K562 (cell line): ENCODE measurements at regions of chr11 and their contacts with region 1.

Region 1: GRCh38 chr11:124673333-124674167 is at the starts of genes SIAE and SPA17:
- DNase-seq: peak; percentile 95 to 98 (median 97)
- ATAC-seq: peak; percentile 99
- H3K4me3 ChIP-seq: peak within 1 kb of the TSS; percentile 83
- H3K27ac ChIP-seq: peak within 1 kb of the TSS; percentile 76
- H3K4me1 ChIP-seq: peaks cover 4 to 14% of the 10 kb centered on the region in 2 experiments
- H3K27me3 ChIP-seq: no peaks in the 10 kb centered on the region
- CTCF ChIP-seq: no peak
- EP300 ChIP-seq: peak; percentile 41; the same call in 1 of the 2 replicates
- POLR2A ChIP-seq: peak; percentile 86
- RAD21 ChIP-seq: no peak
- polyA plus RNA-seq, gene SIAE: 0.89 to 1.2 TPM
- polyA plus RNA-seq, gene SPA17: 9.0 to 9.9 TPM

Region 2: GRCh38 chr11:124693142-124693541 is 19.6 kb after region 1 on chr11:
- CTCF ChIA-PET with region 1: no interaction called
- POLR2A ChIA-PET with region 1: no interaction called
- in situ Hi-C with region 1: no loop called
- intact Hi-C with region 1: no loop called
- DNase-seq: no peak
- ATAC-seq: no peak
- H3K4me3 ChIP-seq: no peak overlapping the region
- H3K27ac ChIP-seq: no peak overlapping the region
- H3K4me1 ChIP-seq: no peaks in the 10 kb centered on the region
- H3K27me3 ChIP-seq: 0 out of 5 replicates have a peak, but pooled peaks cover 3 to 4% of the 10 kb centered on the region in 2 experiments
- CTCF ChIP-seq: no peak
- EP300 ChIP-seq: no peak
- POLR2A ChIP-seq: no peak
- RAD21 ChIP-seq: no peak

Region 3: DNA sequence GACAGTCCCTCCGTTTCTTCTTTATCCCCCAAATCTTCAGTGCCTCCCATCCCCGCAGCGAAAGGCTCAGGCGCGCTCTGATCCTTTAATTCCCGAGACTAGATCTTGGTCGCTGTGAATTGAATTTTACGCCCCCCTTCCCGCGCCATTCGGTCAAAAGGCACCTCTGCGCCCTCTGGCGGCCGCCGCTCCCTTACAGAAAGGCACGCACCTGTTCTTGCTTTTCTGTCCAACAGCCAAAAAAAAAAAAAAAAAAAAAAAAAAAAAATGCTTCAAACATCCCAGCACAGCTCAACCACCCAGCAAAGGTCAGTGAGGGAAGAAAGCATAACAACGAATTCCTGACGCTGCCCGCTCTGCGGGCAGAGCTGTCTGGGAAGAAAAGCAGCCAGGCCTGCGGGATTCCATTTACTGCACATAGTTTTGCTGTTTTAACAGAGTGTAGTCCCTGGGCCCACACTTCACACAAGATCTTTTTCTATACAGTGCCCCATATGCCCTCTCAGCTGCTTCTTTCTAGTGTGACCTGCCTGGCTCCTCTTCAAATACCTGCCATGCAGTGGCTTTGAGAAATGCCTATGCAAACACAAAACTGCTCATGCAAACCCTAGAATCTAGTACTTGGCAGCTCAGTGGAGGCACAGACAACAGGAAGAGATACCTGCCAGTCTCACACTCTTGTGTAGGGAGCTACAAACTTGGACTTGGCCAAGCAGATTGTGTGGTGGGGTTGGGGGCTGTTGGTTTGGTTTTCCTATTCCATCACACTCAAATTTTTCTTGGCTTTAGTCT is 89.8 kb after region 1 on chr11:
- CTCF ChIA-PET with region 1: interaction called, 18 read pairs
- POLR2A ChIA-PET with region 1: interaction called, 3 read pairs
- in situ Hi-C with region 1: loop called (anchors 10 kb)
- intact Hi-C with region 1: loop called (anchors 1 kb)
- DNase-seq: peak; percentile 62 to 87 (median 66)
- ATAC-seq: peak; percentile 75
- H3K4me3 ChIP-seq: peak overlapping the region; percentile 46
- H3K27ac ChIP-seq: no peak overlapping the region
- H3K4me1 ChIP-seq: peaks cover 0 to 34% of the 10 kb centered on the region in 2 experiments; a peak in 4 of 5 replicates
- H3K27me3 ChIP-seq: peaks cover 0 to 22% of the 10 kb centered on the region in 2 experiments; a peak in 2 of 5 replicates
- CTCF ChIP-seq: peak; percentile 82 to 84 (median 84)
- EP300 ChIP-seq: no peak
- POLR2A ChIP-seq: no peak
- RAD21 ChIP-seq: peak; percentile 55 to 70

Region 4: DNA sequence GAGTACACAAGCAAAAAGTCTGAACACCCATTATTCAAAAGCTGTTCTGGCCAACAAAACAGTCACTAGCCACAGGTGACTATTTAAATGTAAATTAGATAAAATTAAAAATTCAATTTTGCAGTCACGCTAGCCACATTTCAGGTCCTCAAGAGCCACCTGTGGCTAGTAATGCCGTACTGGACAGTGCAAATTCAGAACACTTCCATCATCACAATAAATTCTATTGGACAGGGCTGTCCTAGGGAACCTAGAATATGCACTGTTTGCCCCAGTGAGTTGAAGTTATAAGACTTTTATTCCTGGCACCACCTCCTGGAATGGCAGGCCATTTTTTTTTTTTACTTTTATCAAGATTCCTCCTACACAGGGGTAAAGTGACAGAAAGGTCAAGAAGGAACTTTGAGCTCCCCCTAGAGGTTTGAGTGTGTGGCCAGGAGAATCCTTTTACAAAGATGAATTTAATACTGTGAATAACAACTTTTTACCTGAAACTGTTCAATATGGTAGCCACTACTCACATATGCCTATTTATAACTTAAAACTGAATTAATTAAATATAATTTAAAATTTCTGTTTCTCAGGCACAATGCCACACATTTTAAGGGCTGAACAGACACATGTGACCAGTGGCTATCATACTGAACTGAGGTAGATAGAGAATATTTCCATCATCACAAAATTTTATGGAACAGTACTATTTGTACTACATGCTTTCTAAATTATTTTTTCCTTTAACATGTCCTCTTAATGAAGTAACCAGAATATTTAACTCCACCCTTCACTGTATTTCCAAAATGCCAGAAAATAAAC is 120.1 kb after region 1 on chr11:
- CTCF ChIA-PET with region 1: interaction called, 10 read pairs
- POLR2A ChIA-PET with region 1: no interaction called
- in situ Hi-C with region 1: no loop called
- intact Hi-C with region 1: loop called (anchors 1 kb)
- DNase-seq: peak; percentile 31 to 76 (median 48)
- ATAC-seq: peak; percentile 93
- H3K4me3 ChIP-seq: no peak overlapping the region
- H3K27ac ChIP-seq: no peak overlapping the region
- H3K4me1 ChIP-seq: 0 out of 5 replicates have a peak, but pooled peaks cover 0 to 3% of the 10 kb centered on the region in 2 experiments
- H3K27me3 ChIP-seq: no peaks in the 10 kb centered on the region
- CTCF ChIP-seq: peak; percentile 59 to 86 (median 72); a peak in 5 of 6 replicates
- EP300 ChIP-seq: no peak; the same call in 1 of the 2 replicates
- POLR2A ChIP-seq: no peak
- RAD21 ChIP-seq: peak; percentile 67 to 74

Region 5: DNA sequence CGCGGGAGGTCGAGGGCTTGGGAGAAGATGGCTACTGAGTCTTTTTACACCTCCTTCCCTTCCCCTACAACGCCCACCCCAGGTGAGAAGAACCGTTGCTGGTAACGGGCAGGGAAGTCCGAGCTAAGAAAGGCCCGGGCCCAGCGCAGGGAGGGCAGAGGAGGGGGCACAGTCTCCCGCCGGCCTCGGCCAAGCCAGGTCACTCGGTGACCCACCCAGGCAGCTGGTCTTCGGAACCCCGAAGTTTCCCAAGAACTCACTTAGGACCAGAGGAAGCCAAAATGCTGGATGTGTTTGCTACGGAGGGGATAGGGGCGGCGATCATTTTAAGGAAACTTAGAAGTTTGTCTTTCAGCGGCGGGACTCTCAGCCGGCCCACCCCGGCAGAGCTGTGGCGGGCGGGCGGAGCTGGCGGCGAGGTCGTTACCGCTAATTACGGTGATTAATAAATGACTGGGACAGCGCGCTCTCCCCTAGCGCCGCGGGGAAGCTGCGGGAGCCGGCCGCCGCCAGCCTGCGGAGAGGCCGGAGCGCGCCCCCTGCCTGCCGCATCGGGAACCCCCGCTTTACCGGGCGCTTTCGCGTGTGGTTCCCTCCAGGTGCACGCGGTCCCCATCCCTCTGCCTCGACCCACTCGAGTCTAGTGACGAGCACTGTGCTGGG is 192.5 kb after region 1 on chr11:
- CTCF ChIA-PET with region 1: interaction called, 7 read pairs
- POLR2A ChIA-PET with region 1: interaction called, 3 read pairs
- in situ Hi-C with region 1: no loop called
- intact Hi-C with region 1: loop called (anchors 1 kb)
- DNase-seq: peak; percentile 58 to 85 (median 84)
- ATAC-seq: peak; percentile 91
- H3K4me3 ChIP-seq: no peak overlapping the region
- H3K27ac ChIP-seq: no peak overlapping the region; the same call in 2 of the 3 replicates
- H3K4me1 ChIP-seq: peaks cover 5 to 22% of the 10 kb centered on the region in 2 experiments; a peak in 2 of 5 replicates
- H3K27me3 ChIP-seq: peaks cover 30 to 82% of the 10 kb centered on the region in 2 experiments
- CTCF ChIP-seq: peak; percentile 70 to 84 (median 82)
- EP300 ChIP-seq: no peak
- POLR2A ChIP-seq: no peak
- RAD21 ChIP-seq: peak; percentile 40 to 68